GM10248 (cell line): ENCODE measurements at regions of chr3 and their contacts with region 1.

Region 1: GRCh38 chr3:144257381-144257780 is 285.8 kb downstream of the DIPK2A start:
- DNase-seq: no peak
- CTCF ChIP-seq: no peak

Region 2: DNA sequence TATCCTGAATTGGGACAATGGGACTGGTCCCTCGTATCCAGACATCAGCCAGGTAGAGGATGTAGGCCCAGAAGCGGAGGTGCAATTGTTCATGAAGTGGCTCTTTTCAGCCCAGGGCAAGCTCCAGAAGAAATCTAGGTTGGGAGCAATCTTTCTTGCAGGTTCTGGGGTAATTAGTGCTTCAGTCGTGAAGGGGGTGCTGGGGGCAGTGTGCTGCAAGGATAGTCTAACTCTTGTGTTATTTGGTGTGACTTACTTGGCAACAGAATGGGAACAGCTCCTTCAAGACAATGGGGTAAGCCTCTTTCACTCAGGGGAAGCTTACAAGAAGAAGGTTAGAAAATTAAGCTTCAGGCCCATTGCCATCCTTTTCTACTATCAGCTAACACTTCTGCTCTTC is 12.7 kb before region 1 on chr3:
- CTCF ChIA-PET with region 1: interaction called, 11 read pairs
- POLR2A ChIA-PET with region 1: no interaction called
- DNase-seq: no peak
- CTCF ChIP-seq: no peak

Region 3: DNA sequence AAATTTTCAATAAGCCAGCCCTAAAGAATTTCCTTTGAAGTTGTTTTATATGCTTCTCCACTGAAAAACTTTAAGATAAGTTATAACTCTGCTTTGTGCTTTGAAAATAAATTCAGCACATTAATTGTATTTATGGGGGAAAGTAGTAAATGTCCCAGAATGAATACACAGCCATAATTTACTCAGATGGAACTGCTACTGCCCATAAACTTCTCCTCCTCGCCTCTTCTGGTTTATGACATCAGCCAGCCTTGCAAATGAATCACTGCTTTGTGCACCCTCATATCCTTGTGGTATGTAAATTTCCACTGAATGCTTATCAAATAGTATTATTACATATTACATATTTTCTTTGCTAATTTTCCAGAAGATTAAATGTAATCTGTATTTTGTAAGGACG is 16.2 kb after region 1 on chr3:
- CTCF ChIA-PET with region 1: no interaction called
- POLR2A ChIA-PET with region 1: no interaction called
- DNase-seq: no peak
- CTCF ChIP-seq: no peak

Region 4: GRCh38 chr3:144403040-144403457 is 145.7 kb after region 1 on chr3:
- CTCF ChIA-PET with region 1: no interaction called
- POLR2A ChIA-PET with region 1: no interaction called
- DNase-seq: no peak
- CTCF ChIP-seq: no peak